ENCODE measurements at regions of chr9 and their contacts with region 1.

Region 1: GRCh38 chr9:79012561-79012960 is 559.2 kb upstream of the TLE4 start:
- DNase-seq: no peak
- H3K4me3 ChIP-seq: no peak overlapping the region
- H3K27ac ChIP-seq: no peak overlapping the region
- H3K4me1 ChIP-seq: no peaks in the 10 kb centered on the region
- H3K27me3 ChIP-seq: no peaks in the 10 kb centered on the region
- CTCF ChIP-seq: no peak
- EP300 ChIP-seq: no peak
- POLR2A ChIP-seq: no peak

Region 2: DNA sequence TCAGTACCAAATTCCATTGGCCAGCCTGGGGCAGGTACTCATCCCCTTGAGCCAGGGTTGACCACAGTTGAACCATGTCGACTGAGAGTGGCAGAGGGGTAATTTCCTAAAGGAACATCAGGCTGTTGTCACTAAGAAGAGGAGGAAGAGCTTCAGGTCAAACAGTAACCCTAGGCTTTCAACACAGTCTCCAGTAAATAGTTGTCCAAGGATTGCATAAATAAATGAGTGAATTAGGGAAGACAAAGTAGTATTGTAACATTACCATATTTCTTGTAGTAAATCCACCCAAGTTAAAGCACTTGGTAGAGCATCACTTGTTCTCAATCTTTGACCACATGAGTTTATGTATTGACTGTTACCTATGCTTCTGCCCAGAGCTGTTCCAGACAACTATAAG is 708.2 kb before region 1 on chr9:
- intact Hi-C with region 1: no loop called
- DNase-seq: no peak
- H3K4me3 ChIP-seq: no peak overlapping the region
- H3K27ac ChIP-seq: no peak overlapping the region
- H3K4me1 ChIP-seq: peaks cover 0 to 18% (median 2%) of the 10 kb centered on the region in 4 donors
- H3K27me3 ChIP-seq: peaks cover 0 to 10% (median 0%) of the 10 kb centered on the region in 3 donors
- CTCF ChIP-seq: no peak
- EP300 ChIP-seq: no peak
- POLR2A ChIP-seq: no peak

Region 3: DNA sequence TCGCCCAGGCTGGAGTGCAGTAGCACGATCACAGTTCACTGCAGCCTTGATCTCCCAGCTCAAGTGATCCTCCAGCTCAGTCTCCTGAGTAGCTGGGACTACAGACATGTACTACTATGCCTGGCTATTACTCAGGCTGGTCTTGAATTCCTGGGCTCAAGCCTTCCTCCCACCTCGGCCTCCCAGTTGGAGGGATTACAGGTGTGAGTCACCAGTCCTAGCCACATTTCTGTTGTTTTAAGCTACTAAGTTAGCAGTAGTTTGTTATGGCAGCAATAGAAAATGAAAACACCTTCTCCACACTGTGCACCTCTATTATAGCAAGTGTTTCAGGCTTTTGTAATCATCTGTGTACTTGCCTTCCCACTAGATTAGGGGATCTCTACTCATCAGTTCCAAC is 29.7 kb before region 1 on chr9:
- intact Hi-C with region 1: no loop called
- DNase-seq: no peak
- H3K4me3 ChIP-seq: no peak overlapping the region
- H3K27ac ChIP-seq: no peak overlapping the region
- H3K4me1 ChIP-seq: no peaks in the 10 kb centered on the region
- H3K27me3 ChIP-seq: no peaks in the 10 kb centered on the region
- CTCF ChIP-seq: no peak
- EP300 ChIP-seq: no peak
- POLR2A ChIP-seq: no peak

Region 4: DNA sequence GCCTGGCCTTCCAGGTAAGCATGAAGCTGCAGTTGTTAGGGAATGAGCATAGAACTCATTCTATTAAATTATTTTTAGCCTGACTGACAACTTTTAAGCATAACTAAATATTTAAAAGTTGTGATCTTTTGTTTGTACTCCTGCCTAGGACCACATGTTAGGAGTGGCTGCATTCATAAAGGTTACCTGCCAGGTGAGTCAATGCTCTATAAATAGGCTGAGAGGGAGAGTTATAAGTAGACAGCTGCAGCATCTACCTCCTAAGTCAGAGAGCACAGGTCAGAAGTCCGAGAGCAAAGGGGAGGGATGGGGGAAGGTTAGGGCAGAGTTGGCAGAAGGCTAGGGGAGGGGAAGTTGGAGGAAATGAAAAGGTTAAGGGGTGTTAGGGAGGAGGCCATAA is 266.8 kb after region 1 on chr9:
- intact Hi-C with region 1: loop called (anchors 5 kb)
- DNase-seq: no peak
- H3K4me3 ChIP-seq: no peak overlapping the region
- H3K27ac ChIP-seq: no peak overlapping the region
- H3K4me1 ChIP-seq: no peaks in the 10 kb centered on the region
- H3K27me3 ChIP-seq: no peaks in the 10 kb centered on the region
- CTCF ChIP-seq: no peak
- EP300 ChIP-seq: no peak
- POLR2A ChIP-seq: no peak

Measured in sigmoid colon (tissue), 7 donors.